Vagina (tissue), 2 donors: ENCODE measurements at regions of chr13 and their contacts with region 1.

Region 1: GRCh38 chr13:109786457-109787134 is at the start of gene IRS2:
- DNase-seq: peak; percentile 96 to 97
- H3K4me3 ChIP-seq: peak within 1 kb of the TSS; percentile 74 to 84
- H3K27ac ChIP-seq: peak within 1 kb of the TSS; percentile 92
- H3K4me1 ChIP-seq: peaks cover 20% of the 10 kb centered on the region
- H3K27me3 ChIP-seq: no peaks in the 10 kb centered on the region
- CTCF ChIP-seq: no peak
- POLR2A ChIP-seq: peak; percentile 79 to 99
- total RNA-seq, gene IRS2: 25.0 TPM

Region 2: GRCh38 chr13:108957369-108958012 is 829.1 kb before region 1 on chr13:
- intact Hi-C with region 1: loop called (anchors 10 kb)
- DNase-seq: no peak
- H3K4me3 ChIP-seq: no peak overlapping the region
- H3K27ac ChIP-seq: no peak overlapping the region
- H3K4me1 ChIP-seq: no peaks in the 10 kb centered on the region
- H3K27me3 ChIP-seq: no peaks in the 10 kb centered on the region
- CTCF ChIP-seq: no peak
- POLR2A ChIP-seq: no peak

Region 3: GRCh38 chr13:109145631-109146030 is 641.0 kb before region 1 on chr13:
- intact Hi-C with region 1: loop called (anchors 5 kb)
- DNase-seq: no peak
- H3K4me3 ChIP-seq: no peak overlapping the region
- H3K27ac ChIP-seq: no peak overlapping the region
- H3K4me1 ChIP-seq: no peaks in the 10 kb centered on the region
- H3K27me3 ChIP-seq: no peaks in the 10 kb centered on the region
- CTCF ChIP-seq: peak; percentile 26 to 59 (median 29)
- POLR2A ChIP-seq: no peak

Region 4: DNA sequence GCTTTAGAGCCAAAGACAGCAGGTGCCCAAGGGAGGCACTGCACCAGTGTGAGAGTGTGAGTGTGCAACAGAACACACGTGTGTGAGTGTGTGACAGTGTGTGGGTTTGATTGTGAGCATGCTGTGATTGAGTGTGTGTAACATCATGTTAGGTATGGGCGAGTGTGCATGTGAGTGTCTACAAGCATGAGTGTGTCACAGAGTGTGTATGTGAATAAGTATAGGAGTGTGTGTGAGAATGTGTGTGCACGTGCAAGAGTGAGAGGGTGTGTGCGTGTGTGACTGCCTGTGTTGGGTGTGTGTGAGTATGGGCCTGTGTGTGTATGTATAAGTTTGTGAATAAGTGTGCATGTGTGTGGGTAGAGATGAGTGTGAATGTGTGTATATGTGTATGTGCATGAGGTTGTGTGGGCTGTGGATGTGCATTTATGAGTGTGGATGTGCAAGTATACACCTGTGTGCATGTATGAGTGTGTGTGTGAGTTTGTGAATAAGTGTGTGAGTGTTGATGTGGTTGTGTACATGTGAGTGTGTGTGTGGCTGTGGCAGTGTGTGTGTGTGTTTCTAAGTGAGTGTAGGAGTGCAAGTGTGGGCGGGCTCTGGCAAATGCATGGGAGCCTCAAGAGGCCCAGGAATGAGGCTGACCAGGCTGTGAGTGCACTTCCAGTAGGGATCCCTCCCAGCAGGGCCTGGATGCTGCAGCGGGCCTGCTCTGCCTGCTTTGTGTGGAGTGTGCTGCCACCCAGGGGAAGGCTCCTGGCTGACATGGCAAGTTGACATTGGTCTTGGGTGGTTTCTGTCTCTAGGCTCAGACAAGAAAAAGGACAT is 322.0 kb after region 1 on chr13:
- intact Hi-C with region 1: loop called (anchors 10 kb)
- DNase-seq: peak; percentile 72 to 89
- H3K4me3 ChIP-seq: no peak overlapping the region
- H3K27ac ChIP-seq: peak overlapping the region; percentile 73
- H3K4me1 ChIP-seq: peaks cover 16% of the 10 kb centered on the region
- H3K27me3 ChIP-seq: no peaks in the 10 kb centered on the region
- CTCF ChIP-seq: peak; percentile 33 to 69 (median 40)
- POLR2A ChIP-seq: no peak